ENCODE measurements at regions of chr12 and their contacts with region 1.

Region 1: GRCh38 chr12:94941440-94941862 is 62.0 kb downstream of the NDUFA12 start:
- DNase-seq: no peak
- H3K4me3 ChIP-seq: no peak overlapping the region
- H3K27ac ChIP-seq: no peak overlapping the region
- H3K4me1 ChIP-seq: no peaks in the 10 kb centered on the region
- H3K27me3 ChIP-seq: no peaks in the 10 kb centered on the region
- CTCF ChIP-seq: no peak
- EP300 ChIP-seq: no peak
- POLR2A ChIP-seq: no peak
- RAD21 ChIP-seq: no peak

Region 2: GRCh38 chr12:94922561-94922960 is 18.9 kb before region 1 on chr12:
- CTCF ChIA-PET with region 1: interaction called, 19 read pairs
- POLR2A ChIA-PET with region 1: no interaction called
- DNase-seq: no peak
- H3K4me3 ChIP-seq: no peak overlapping the region
- H3K27ac ChIP-seq: no peak overlapping the region
- H3K4me1 ChIP-seq: peaks cover 2 to 10% (median 6%) of the 10 kb centered on the region in 4 experiments; a peak in 2 of 7 replicates
- H3K27me3 ChIP-seq: no peaks in the 10 kb centered on the region
- CTCF ChIP-seq: no peak
- EP300 ChIP-seq: no peak
- POLR2A ChIP-seq: no peak
- RAD21 ChIP-seq: no peak

Region 3: DNA sequence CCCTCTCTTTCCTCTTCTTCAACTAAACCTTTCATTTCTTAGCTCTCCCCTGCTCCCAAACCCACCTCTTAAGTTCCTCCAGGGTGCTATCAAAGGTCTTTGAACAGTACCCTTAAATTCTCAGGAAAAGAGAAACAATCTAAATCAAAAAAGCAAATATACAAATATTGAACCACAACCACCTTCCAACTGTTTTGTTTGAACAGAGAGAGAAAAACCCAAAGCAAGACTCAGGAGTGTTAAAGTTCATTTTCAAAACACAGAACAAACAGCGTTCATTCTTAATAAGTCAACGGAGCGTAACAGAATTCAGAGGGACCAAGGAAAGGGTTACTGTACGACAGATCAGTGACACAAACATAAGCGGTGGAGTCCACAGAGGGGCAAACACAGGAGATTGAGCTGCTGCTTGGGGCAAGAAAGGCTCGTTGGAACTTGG is 11.2 kb before region 1 on chr12:
- CTCF ChIA-PET with region 1: interaction called, 19 read pairs
- POLR2A ChIA-PET with region 1: no interaction called
- DNase-seq: no peak
- H3K4me3 ChIP-seq: no peak overlapping the region
- H3K27ac ChIP-seq: no peak overlapping the region
- H3K4me1 ChIP-seq: no peaks in the 10 kb centered on the region
- H3K27me3 ChIP-seq: no peaks in the 10 kb centered on the region
- CTCF ChIP-seq: no peak
- EP300 ChIP-seq: no peak
- POLR2A ChIP-seq: no peak
- RAD21 ChIP-seq: no peak

Region 4: GRCh38 chr12:94961256-94961824 is 19.9 kb after region 1 on chr12:
- CTCF ChIA-PET with region 1: interaction called, 18 read pairs
- POLR2A ChIA-PET with region 1: no interaction called
- DNase-seq: no peak
- H3K4me3 ChIP-seq: no peak overlapping the region
- H3K27ac ChIP-seq: no peak overlapping the region
- H3K4me1 ChIP-seq: no peaks in the 10 kb centered on the region
- H3K27me3 ChIP-seq: no peaks in the 10 kb centered on the region
- CTCF ChIP-seq: no peak
- EP300 ChIP-seq: no peak
- POLR2A ChIP-seq: no peak
- RAD21 ChIP-seq: no peak

Region 5: DNA sequence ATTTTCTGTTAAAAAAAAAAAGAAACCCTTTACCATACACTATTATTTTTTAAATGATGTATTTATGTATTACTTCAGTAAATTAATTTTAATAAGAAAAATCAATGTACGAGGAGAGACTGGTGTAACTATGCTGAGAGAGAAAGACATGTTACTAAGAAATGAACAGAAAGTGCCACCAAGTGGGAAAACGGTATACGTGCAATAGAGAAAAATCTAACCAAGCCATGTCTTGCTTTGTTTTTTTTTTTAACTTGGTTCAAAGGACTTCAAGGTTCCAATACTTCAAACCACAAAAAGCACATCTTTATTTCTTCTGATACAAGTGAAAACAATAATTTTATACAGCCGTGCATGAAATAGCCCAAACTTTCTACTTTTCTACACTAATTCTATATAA is 39.1 kb after region 1 on chr12:
- CTCF ChIA-PET with region 1: interaction called, 12 read pairs
- POLR2A ChIA-PET with region 1: no interaction called
- DNase-seq: no peak
- H3K4me3 ChIP-seq: no peak overlapping the region
- H3K27ac ChIP-seq: no peak overlapping the region
- H3K4me1 ChIP-seq: peaks cover 0 to 6% (median 1%) of the 10 kb centered on the region in 4 experiments; a peak in 2 of 7 replicates
- H3K27me3 ChIP-seq: no peaks in the 10 kb centered on the region
- CTCF ChIP-seq: peak in 1 of 3 experiments; percentile 7; a peak in 2 of 4 replicates
- EP300 ChIP-seq: no peak
- POLR2A ChIP-seq: no peak
- RAD21 ChIP-seq: peak; percentile 25 to 31; a peak in 3 of 4 replicates

Measured in H1 (cell line).